ENCODE measurements at regions of chr9 and their contacts with region 1.

Region 1: DNA sequence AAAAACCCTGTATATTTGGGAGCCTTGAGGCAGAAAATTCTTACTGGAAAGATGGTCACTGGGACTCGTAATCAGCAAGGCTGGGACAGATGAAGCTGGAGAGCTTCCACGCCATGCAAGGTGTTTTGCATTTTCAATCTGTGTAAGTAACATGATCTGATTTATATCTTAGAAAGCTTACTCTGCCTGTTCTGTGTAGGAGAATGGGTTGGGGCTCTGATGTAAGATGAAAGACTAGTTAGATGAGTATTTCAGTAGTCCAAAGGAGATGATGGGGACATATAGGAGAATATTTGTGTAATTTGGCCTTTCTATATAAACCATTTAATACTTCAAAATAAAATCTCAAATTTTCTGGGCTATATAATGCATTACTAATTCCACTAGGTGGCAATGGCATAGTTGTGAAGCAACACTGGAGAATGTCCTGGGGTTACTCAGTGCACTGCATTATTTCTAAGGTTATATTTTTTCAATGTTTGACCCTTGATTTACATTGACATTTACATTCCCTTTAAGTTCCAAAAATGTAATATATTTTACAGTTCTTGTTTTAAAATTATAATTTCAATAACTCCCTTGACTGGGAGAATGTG is 21.9 kb upstream of the FSD1L start:
- DNase-seq: peak; percentile 32
- H3K4me3 Mint-ChIP-seq: no peak overlapping the region
- H3K27ac Mint-ChIP-seq: no peak overlapping the region
- H3K4me1 Mint-ChIP-seq: no peaks in the 10 kb centered on the region
- H3K27me3 Mint-ChIP-seq: no peaks in the 10 kb centered on the region
- CTCF ChIP-seq: peak; percentile 50

Region 2: GRCh38 chr9:105405514-105406131 is 20.3 kb before region 1 on chr9:
- CTCF ChIA-PET with region 1: no interaction called
- POLR2A ChIA-PET with region 1: no interaction called
- intact Hi-C with region 1: no loop called
- DNase-seq: no peak
- H3K4me3 Mint-ChIP-seq: no peak overlapping the region
- H3K27ac Mint-ChIP-seq: no peak overlapping the region
- H3K4me1 Mint-ChIP-seq: no peaks in the 10 kb centered on the region
- H3K27me3 Mint-ChIP-seq: no peaks in the 10 kb centered on the region
- CTCF ChIP-seq: no peak

Region 3: GRCh38 chr9:105557771-105558610 is 132.1 kb after region 1 on chr9 and contains the start of gene FKTN:
- CTCF ChIA-PET with region 1: no interaction called
- POLR2A ChIA-PET with region 1: no interaction called
- intact Hi-C with region 1: loop called (anchors 5 kb)
- DNase-seq: peak; percentile 84
- H3K4me3 Mint-ChIP-seq: peak within 1 kb of the TSS; percentile 94
- H3K27ac Mint-ChIP-seq: peak within 1 kb of the TSS; percentile 66
- H3K4me1 Mint-ChIP-seq: peaks cover 12% of the 10 kb centered on the region
- H3K27me3 Mint-ChIP-seq: no peaks in the 10 kb centered on the region
- CTCF ChIP-seq: no peak
- total RNA-seq, gene FKTN: 34.5 and 38.3 TPM in 2 replicates